Activated CD4-positive, alpha-beta memory T cell treated with anti-CD3 and anti-CD28 coated beads for 36 hours (primary cell): ENCODE measurements at regions of chr18 and their contacts with region 1.

Region 1: GRCh38 chr18:35355140-35355618 is 11.0 kb upstream of the ZNF24 start:
- DNase-seq: peak; percentile 71
- H3K4me3 Mint-ChIP-seq: no peak overlapping the region
- H3K27ac Mint-ChIP-seq: no peak overlapping the region
- H3K4me1 Mint-ChIP-seq: peaks cover 5% of the 10 kb centered on the region
- H3K27me3 Mint-ChIP-seq: no peaks in the 10 kb centered on the region

Region 2: DNA sequence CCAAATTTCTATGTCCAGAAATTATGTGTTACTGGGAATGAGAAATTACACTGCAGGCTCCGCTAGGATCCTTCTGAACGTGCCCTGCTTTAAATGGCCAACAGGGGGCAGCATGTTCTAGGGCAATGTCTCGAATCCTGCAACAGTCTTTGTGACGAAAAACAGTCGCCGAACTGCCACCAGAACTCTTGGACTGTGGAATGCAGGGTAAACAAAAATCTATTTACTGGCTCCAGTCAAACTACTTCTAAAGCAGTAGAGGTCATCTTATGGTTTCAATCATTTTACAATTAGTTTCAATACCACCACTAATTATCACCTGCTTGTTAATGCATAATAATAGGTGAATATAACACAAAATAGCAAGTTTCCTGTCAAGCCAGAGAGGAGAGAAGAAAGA is 124.1 kb before region 1 on chr18:
- CTCF ChIA-PET with region 1: interaction called, 38 read pairs
- POLR2A ChIA-PET with region 1: interaction called, 3 read pairs
- intact Hi-C with region 1: loop called (anchors 1 kb)
- DNase-seq: peak; percentile 83
- H3K4me3 Mint-ChIP-seq: peak overlapping the region; percentile 31
- H3K27ac Mint-ChIP-seq: no peak overlapping the region
- H3K4me1 Mint-ChIP-seq: peaks cover 3% of the 10 kb centered on the region
- H3K27me3 Mint-ChIP-seq: peaks cover 3% of the 10 kb centered on the region